Endothelial cell of umbilical vein (primary cell): ENCODE measurements at regions of chr3 and their contacts with region 1.

Region 1: GRCh38 chr3:185049710-185050109 is 103.2 kb downstream of the C3orf70 start:
- DNase-seq: no peak
- H3K4me3 ChIP-seq: no peak overlapping the region
- H3K27ac ChIP-seq: no peak overlapping the region
- H3K4me1 ChIP-seq: peaks cover 23% of the 10 kb centered on the region
- H3K27me3 ChIP-seq: no peaks in the 10 kb centered on the region
- CTCF ChIP-seq: no peak
- POLR2A ChIP-seq: no peak

Region 2: DNA sequence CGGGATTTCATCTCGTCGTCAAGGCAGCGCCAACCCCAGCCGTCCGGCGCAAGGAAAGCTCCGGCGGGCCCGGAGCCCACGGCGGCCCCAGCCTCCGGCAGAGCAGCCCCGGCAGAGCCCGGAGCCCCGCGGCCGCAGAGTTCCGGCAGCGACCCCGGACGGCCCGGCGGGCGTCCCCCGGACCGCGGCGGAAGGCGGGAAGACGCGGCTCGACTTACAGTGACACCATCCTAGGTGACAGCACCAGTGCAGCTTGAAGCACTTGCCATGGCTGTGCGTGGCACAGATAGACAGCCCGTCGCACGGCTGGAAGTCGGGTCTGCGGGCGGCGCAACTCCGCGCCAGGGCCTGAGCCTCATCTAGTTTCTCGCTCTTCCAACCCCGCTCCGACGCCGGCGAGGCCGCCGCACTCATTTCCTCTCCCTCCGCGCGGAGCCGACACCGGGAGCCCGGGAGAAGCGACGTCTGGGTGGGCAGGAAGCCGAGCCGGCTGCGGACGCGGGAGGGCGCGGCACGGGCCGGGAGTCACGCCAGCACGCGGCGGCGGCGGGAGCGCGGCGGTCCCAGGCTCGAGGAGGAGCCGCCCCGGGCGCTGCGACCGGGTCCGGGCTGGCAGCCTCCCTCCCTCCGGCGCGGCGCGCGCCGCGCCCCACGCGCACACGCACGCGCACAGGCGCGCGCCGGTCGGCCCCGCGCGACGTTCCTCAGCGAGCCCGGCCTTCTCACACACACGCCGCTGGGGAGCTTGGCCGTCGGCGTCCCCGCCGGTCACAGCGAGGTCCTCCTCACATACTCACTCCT is 102.9 kb after region 1 on chr3 and contains the start of gene C3orf70:
- CTCF ChIA-PET with region 1: no interaction called
- POLR2A ChIA-PET with region 1: no interaction called
- dilution Hi-C with region 1: no loop called
- intact Hi-C with region 1: loop called (anchors 5 kb)
- DNase-seq: peak; percentile 40
- H3K4me3 ChIP-seq: peak within 1 kb of the TSS; percentile 33 to 48 (median 47)
- H3K27ac ChIP-seq: no peak within 1 kb of the TSS
- H3K4me1 ChIP-seq: peaks cover 7% of the 10 kb centered on the region
- H3K27me3 ChIP-seq: peaks cover 41 to 55% of the 10 kb centered on the region in 2 experiments
- CTCF ChIP-seq: no peak
- POLR2A ChIP-seq: no peak
- total RNA-seq, gene C3orf70: 0.18 and 0.20 TPM in 2 replicates